ENCODE measurements at regions of chr10 and their contacts with region 1.

Region 1: GRCh38 chr10:31864834-31865518 is 63.7 kb downstream of the ARHGAP12 start:
- DNase-seq: no peak
- ATAC-seq: no peak
- H3K4me3 ChIP-seq: no peak overlapping the region
- H3K4me3 Mint-ChIP-seq: no peak overlapping the region
- H3K27ac ChIP-seq: no peak overlapping the region
- H3K27ac Mint-ChIP-seq: no peak overlapping the region
- H3K4me1 ChIP-seq: peaks cover 3 to 5% of the 10 kb centered on the region in 2 donors
- H3K4me1 Mint-ChIP-seq: peaks cover 24% of the 10 kb centered on the region
- H3K27me3 ChIP-seq: no peaks in the 10 kb centered on the region
- H3K27me3 Mint-ChIP-seq: no peaks in the 10 kb centered on the region
- CTCF ChIP-seq: no peak

Region 2: GRCh38 chr10:31851216-31851615 is 13.8 kb before region 1 on chr10:
- CTCF ChIA-PET with region 1: interaction called, 12 read pairs
- POLR2A ChIA-PET with region 1: no interaction called
- intact Hi-C with region 1: no loop called
- DNase-seq: no peak
- ATAC-seq: no peak
- H3K4me3 ChIP-seq: no peak overlapping the region
- H3K4me3 Mint-ChIP-seq: no peak overlapping the region
- H3K27ac ChIP-seq: no peak overlapping the region
- H3K27ac Mint-ChIP-seq: no peak overlapping the region
- H3K4me1 ChIP-seq: no peaks in the 10 kb centered on the region
- H3K4me1 Mint-ChIP-seq: no peaks in the 10 kb centered on the region
- H3K27me3 ChIP-seq: no peaks in the 10 kb centered on the region
- H3K27me3 Mint-ChIP-seq: no peaks in the 10 kb centered on the region
- CTCF ChIP-seq: no peak

Region 3: DNA sequence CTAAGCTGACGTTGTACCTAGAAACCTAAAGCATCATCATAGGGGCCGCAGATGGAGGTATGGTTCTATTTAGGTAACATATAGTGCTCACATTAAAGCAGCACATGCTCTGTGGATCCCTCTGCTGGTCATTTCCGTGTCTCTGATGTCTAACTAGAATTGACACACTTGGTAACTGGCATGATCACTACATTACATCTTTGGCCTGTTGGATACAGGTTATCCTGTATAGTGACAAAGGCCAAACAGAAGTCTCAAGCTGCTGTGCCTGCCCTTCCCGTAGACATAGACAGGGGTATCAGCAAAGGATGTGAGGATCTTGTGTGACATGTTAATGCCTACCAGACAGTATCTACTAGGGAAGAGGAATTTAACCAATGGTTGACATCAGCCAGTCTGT is 140.1 kb after region 1 on chr10:
- CTCF ChIA-PET with region 1: interaction called, 65 read pairs
- POLR2A ChIA-PET with region 1: no interaction called
- intact Hi-C with region 1: loop called (anchors 1 kb)
- DNase-seq: peak; percentile 57
- ATAC-seq: peak; percentile 57
- H3K4me3 ChIP-seq: no peak overlapping the region
- H3K4me3 Mint-ChIP-seq: no peak overlapping the region
- H3K27ac ChIP-seq: no peak overlapping the region
- H3K27ac Mint-ChIP-seq: peak overlapping the region; percentile 43
- H3K4me1 ChIP-seq: no peaks in the 10 kb centered on the region
- H3K4me1 Mint-ChIP-seq: peaks cover 3% of the 10 kb centered on the region
- H3K27me3 ChIP-seq: no peaks in the 10 kb centered on the region
- H3K27me3 Mint-ChIP-seq: no peaks in the 10 kb centered on the region
- CTCF ChIP-seq: peak; percentile 63

Region 4: DNA sequence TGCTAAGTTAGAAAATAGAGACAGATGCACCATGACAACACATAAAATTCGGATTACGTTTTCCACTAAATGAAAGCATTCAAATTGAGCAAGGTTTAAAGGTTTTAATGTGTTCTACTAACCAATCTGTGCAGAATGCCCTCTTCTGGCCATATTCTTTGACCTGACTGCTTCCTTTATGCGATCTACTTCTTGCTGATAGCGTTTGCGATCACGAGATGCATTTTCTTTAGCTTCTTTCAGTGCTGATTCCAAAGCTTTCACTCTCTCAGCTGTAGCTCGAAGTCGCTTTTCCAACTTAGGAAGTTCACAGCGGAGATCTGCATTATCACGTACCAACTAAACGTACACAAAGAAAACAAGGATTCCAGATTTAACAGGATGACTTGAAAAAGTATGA is 152.0 kb after region 1 on chr10:
- CTCF ChIA-PET with region 1: interaction called, 13 read pairs
- POLR2A ChIA-PET with region 1: no interaction called
- intact Hi-C with region 1: no loop called
- DNase-seq: no peak
- ATAC-seq: no peak
- H3K4me3 ChIP-seq: no peak overlapping the region
- H3K4me3 Mint-ChIP-seq: no peak overlapping the region
- H3K27ac ChIP-seq: no peak overlapping the region
- H3K27ac Mint-ChIP-seq: no peak overlapping the region
- H3K4me1 ChIP-seq: no peaks in the 10 kb centered on the region
- H3K4me1 Mint-ChIP-seq: peaks cover 2% of the 10 kb centered on the region
- H3K27me3 ChIP-seq: no peaks in the 10 kb centered on the region
- H3K27me3 Mint-ChIP-seq: no peaks in the 10 kb centered on the region
- CTCF ChIP-seq: no peak

Region 5: GRCh38 chr10:32023264-32023663 is 158.3 kb after region 1 on chr10:
- CTCF ChIA-PET with region 1: interaction called, 13 read pairs
- POLR2A ChIA-PET with region 1: no interaction called
- intact Hi-C with region 1: no loop called
- DNase-seq: no peak
- ATAC-seq: no peak
- H3K4me3 ChIP-seq: no peak overlapping the region
- H3K4me3 Mint-ChIP-seq: no peak overlapping the region
- H3K27ac ChIP-seq: peak overlapping the region in 1 of 2 donors; percentile 0
- H3K27ac Mint-ChIP-seq: no peak overlapping the region
- H3K4me1 ChIP-seq: no peaks in the 10 kb centered on the region
- H3K4me1 Mint-ChIP-seq: peaks cover 8% of the 10 kb centered on the region
- H3K27me3 ChIP-seq: no peaks in the 10 kb centered on the region
- H3K27me3 Mint-ChIP-seq: no peaks in the 10 kb centered on the region
- CTCF ChIP-seq: no peak

Region 6: GRCh38 chr10:32190890-32191491 is 326.0 kb after region 1 on chr10:
- CTCF ChIA-PET with region 1: no interaction called
- POLR2A ChIA-PET with region 1: no interaction called
- intact Hi-C with region 1: loop called (anchors 5 kb)
- DNase-seq: peak; percentile 70
- ATAC-seq: peak; percentile 82
- H3K4me3 ChIP-seq: no peak overlapping the region
- H3K4me3 Mint-ChIP-seq: no peak overlapping the region
- H3K27ac ChIP-seq: no peak overlapping the region
- H3K27ac Mint-ChIP-seq: peak overlapping the region; percentile 79
- H3K4me1 ChIP-seq: peaks cover 0 to 4% of the 10 kb centered on the region in 2 donors
- H3K4me1 Mint-ChIP-seq: peaks cover 5% of the 10 kb centered on the region
- H3K27me3 ChIP-seq: peaks cover 0 to 4% (median 0%) of the 10 kb centered on the region in 4 experiments
- H3K27me3 Mint-ChIP-seq: peaks cover 7% of the 10 kb centered on the region
- CTCF ChIP-seq: peak; percentile 86

Region 7: DNA sequence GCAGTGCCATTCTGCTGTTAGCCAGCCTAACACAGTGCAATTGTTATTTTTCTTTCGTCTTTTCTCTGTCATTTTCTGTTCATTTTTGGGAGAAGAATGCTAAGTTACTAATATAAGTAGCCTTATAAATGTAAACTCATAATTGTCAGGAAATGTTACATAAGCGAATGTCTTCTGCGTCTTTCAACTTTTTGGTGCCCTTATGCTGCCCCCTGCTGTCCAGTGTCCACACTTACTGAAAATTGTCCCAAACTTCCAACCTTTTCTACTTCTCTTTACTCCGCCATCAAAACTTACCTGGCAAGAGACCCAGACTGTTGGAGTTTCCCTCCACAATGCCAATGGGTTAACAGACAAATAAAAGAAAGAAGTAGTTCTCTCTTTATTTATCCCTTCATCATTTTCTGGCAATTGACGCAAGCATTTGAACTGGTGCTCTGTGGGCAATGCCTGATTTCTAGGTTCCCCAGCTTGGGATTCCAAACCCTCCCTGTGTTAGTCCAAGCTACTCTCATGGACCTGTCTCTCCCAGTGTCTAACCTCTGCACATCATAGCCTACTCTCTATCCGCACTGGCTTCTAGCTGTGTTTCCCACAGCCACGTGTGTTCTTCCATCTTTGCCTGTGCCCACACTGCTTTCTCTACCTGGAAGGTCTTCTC is 502.9 kb after region 1 on chr10:
- CTCF ChIA-PET with region 1: no interaction called
- POLR2A ChIA-PET with region 1: interaction called, 3 read pairs
- intact Hi-C with region 1: loop called (anchors 5 kb)
- DNase-seq: peak; percentile 81
- ATAC-seq: peak; percentile 77
- H3K4me3 ChIP-seq: no peak overlapping the region
- H3K4me3 Mint-ChIP-seq: no peak overlapping the region
- H3K27ac ChIP-seq: peak overlapping the region in 1 of 2 donors; percentile 27
- H3K27ac Mint-ChIP-seq: no peak overlapping the region
- H3K4me1 ChIP-seq: peaks cover 6% of the 10 kb centered on the region in 2 donors
- H3K4me1 Mint-ChIP-seq: peaks cover 27% of the 10 kb centered on the region
- H3K27me3 ChIP-seq: no peaks in the 10 kb centered on the region
- H3K27me3 Mint-ChIP-seq: no peaks in the 10 kb centered on the region
- CTCF ChIP-seq: peak; percentile 89